ENCODE measurements at regions of chr12 and their contacts with region 1.

Region 1: DNA sequence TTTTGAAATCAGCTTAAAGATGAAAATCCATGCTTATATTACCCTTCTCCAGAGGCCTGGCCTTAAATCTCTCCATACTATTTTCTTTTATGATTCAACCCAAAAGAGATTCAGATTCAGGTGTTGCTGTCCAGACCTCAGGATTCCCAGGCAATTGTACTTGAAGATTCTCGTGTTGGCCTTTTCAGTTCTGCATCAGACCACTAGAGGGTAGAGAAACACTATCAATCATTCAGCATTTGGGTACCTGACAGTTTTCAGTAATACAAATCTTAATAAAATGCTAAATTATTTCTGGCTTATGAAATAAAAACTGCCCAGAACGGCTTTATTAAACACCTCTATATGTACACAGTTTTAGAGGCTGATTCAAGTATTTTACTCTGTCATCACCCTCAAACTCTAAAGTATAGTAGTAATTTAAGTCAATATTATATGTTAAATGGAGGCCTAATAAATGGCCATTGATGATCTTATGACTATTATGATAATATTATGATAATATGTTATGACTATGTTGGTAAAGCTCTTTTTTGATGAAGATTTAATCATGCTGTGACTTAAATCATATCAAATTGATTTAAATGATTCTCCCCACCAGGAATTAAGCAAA is 301.1 kb downstream of the DUSP6 start:
- DNase-seq: no peak
- H3K4me3 Mint-ChIP-seq: no peak overlapping the region
- H3K27ac Mint-ChIP-seq: no peak overlapping the region
- H3K4me1 Mint-ChIP-seq: peaks cover 31% of the 10 kb centered on the region
- H3K27me3 Mint-ChIP-seq: no peaks in the 10 kb centered on the region

Region 2: GRCh38 chr12:89461649-89462612 is 410.8 kb after region 1 on chr12:
- intact Hi-C with region 1: loop called (anchors 1 kb)
- DNase-seq: no peak
- H3K4me3 Mint-ChIP-seq: peak overlapping the region; percentile 60
- H3K27ac Mint-ChIP-seq: peak overlapping the region; percentile 36
- H3K4me1 Mint-ChIP-seq: peaks cover 43% of the 10 kb centered on the region
- H3K27me3 Mint-ChIP-seq: no peaks in the 10 kb centered on the region

Measured in activated T-helper 1 cell treated with anti-CD3 and anti-CD28 coated beads, Interleukin-12 subunit alpha, Interleukin-12 subunit beta, Interleukin-2, Interleukin-4 antibody, amounts not matched to agents 30 ng/mL and 10 ng/mL and 1 ng/mL, durations not matched to agents 14 hours and 24 hours and 36 hours (primary cell).